Activated T-helper 1 cell treated with anti-CD3 and anti-CD28 coated beads, Interleukin-12 subunit alpha, Interleukin-12 subunit beta, Interleukin-2, Interleukin-4 antibody, amounts not matched to agents 30 ng/mL and 10 ng/mL and 1 ng/mL, durations not matched to agents 14 hours and 24 hours and 36 hours (primary cell): ENCODE measurements at regions of chr5 and their contacts with region 1.

Region 1: GRCh38 chr5:31531888-31532710 is at the starts of genes C5orf22 and DROSHA:
- DNase-seq: peak; percentile 89
- H3K4me3 Mint-ChIP-seq: peak within 1 kb of the TSS; percentile 100
- H3K27ac Mint-ChIP-seq: peak within 1 kb of the TSS; percentile 96
- H3K4me1 Mint-ChIP-seq: peaks cover 55% of the 10 kb centered on the region
- H3K27me3 Mint-ChIP-seq: no peaks in the 10 kb centered on the region
- total RNA-seq, gene C5orf22: 30.1 and 36.6 TPM in 2 replicates
- total RNA-seq, gene DROSHA: 74.0 and 87.6 TPM in 2 replicates

Region 2: DNA sequence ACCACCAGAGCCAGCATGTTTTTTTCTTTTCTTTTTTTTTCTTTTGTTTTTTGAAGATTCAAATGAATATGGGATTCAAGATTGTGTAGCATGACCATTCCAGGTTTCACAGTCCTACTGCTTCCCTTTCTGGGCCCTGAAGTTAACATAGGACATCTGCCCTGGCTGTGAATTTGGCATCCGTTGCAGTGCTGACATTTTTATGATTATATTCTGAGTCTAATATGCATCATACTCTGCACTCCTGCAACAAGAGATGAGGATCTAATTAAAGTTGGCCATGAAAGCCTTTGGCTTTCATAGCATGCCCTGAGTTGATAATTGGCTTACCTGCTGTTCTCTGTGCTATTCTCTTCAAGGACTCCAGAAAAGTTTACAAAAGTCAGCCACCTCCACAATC is 29.8 kb after region 1 on chr5:
- intact Hi-C with region 1: loop called (anchors 1 kb)
- DNase-seq: no peak
- H3K4me3 Mint-ChIP-seq: no peak overlapping the region
- H3K27ac Mint-ChIP-seq: no peak overlapping the region
- H3K4me1 Mint-ChIP-seq: peaks cover 5% of the 10 kb centered on the region
- H3K27me3 Mint-ChIP-seq: no peaks in the 10 kb centered on the region

Region 3: DNA sequence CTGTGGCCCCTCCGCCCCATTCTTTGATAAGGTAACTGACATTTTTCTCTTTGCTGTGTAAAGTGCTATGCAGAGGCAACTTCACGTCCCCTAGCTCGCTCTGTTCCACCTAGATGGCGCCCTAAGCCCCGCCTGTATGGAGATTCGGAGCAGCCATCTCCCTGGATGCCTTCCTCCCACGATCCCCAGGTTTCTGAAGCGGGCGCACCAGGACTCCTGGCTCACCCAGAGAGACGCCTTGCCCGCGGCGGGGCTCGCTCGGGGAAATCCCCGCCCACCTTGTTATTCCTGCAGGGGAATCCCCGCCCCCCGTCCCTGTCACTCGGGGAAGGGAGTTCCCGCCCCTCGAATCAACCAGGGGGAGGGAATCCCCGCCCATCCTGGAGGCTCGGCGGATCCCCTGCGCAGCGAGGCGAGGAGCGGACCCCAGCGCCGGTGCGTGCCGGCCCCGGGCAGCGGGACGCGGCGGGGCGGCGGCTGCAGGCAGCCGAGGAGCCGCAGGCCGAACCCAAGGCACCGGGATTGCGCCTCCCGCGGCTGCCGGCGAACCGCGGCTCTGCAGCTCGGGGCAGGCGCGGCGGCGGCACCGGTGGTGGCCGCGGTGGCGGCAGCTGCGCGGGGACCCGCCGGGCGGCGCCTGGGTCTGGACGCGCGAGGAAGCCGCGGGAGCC is 106.8 kb after region 1 on chr5 and contains the start of gene PDZD2:
- intact Hi-C with region 1: loop called (anchors 2 kb)
- DNase-seq: peak; percentile 48
- H3K4me3 Mint-ChIP-seq: peak within 1 kb of the TSS; percentile 82
- H3K27ac Mint-ChIP-seq: peak within 1 kb of the TSS; percentile 24
- H3K4me1 Mint-ChIP-seq: peaks cover 7% of the 10 kb centered on the region
- H3K27me3 Mint-ChIP-seq: peaks cover 16% of the 10 kb centered on the region
- total RNA-seq, gene PDZD2: not detected in 2 replicates

Region 4: GRCh38 chr5:32092938-32093812 is 561.1 kb after region 1 on chr5:
- intact Hi-C with region 1: loop called (anchors 1 kb)
- DNase-seq: peak; percentile 38
- H3K4me3 Mint-ChIP-seq: no peak overlapping the region
- H3K27ac Mint-ChIP-seq: no peak overlapping the region
- H3K4me1 Mint-ChIP-seq: no peaks in the 10 kb centered on the region
- H3K27me3 Mint-ChIP-seq: no peaks in the 10 kb centered on the region

Region 5: GRCh38 chr5:32312647-32313523 is 780.8 kb after region 1 on chr5 and contains the start of gene MTMR12:
- intact Hi-C with region 1: loop called (anchors 2 kb)
- DNase-seq: peak; percentile 100
- H3K4me3 Mint-ChIP-seq: peak within 1 kb of the TSS; percentile 96
- H3K27ac Mint-ChIP-seq: peak within 1 kb of the TSS; percentile 95
- H3K4me1 Mint-ChIP-seq: peaks cover 38% of the 10 kb centered on the region
- H3K27me3 Mint-ChIP-seq: no peaks in the 10 kb centered on the region
- total RNA-seq, gene MTMR12: 26.2 and 29.9 TPM in 2 replicates

Region 6: DNA sequence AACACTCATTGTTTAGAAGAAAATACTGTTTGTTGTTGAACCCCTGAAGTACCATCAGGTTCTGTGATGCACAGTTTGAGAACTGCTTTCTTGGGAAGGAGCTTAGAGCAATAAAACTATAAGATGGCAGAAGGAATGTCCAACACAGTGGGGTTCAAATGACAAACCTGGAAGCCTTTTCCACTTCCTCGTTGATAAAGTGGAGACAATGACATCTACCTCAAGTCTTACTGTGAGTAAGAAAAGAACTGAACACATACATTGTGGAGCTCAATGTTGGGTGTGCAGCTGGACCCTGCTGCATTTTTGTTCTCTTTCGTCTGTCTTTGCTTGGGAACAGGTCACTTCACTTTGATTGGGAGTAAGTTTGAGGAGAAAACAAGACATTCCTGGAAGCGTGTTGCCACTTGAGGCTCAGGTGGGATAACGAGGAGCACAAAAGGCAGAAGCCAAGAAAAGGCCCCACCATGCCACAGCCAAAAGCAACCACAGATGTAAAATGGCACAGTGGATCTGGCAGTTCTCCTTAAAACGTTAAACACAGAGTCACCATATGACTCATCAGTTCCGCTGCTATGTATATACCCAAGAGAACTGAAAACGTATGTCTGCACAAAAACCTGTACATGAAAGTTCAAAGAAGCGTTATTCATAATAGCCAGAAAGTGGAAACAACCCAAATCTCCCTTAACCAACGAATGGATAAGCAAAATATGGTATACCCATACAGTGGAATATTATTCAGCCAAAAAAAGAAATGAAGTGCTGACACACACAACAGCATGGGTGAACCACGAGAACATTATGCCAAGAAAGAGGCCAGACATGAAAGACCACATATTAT is 1010.3 kb after region 1 on chr5:
- intact Hi-C with region 1: loop called (anchors 5 kb)
- DNase-seq: peak; percentile 59
- H3K4me3 Mint-ChIP-seq: peak overlapping the region; percentile 59
- H3K27ac Mint-ChIP-seq: peak overlapping the region; percentile 92
- H3K4me1 Mint-ChIP-seq: peaks cover 68% of the 10 kb centered on the region
- H3K27me3 Mint-ChIP-seq: no peaks in the 10 kb centered on the region